ENCODE measurements at regions of chr12 and their contacts with region 1.

Region 1: GRCh38 chr12:110600254-110600653 is 13.7 kb upstream of the TCTN1 start:
- DNase-seq: no peak
- ATAC-seq: peak; percentile 74 to 77
- H3K4me3 ChIP-seq: no peak overlapping the region
- H3K27ac ChIP-seq: peak overlapping the region in 3 of 4 donors; percentile 25 to 32 (median 29)
- H3K4me1 ChIP-seq: peaks cover 4 to 9% of the 10 kb centered on the region in 2 donors
- H3K27me3 ChIP-seq: no peaks in the 10 kb centered on the region
- CTCF ChIP-seq: peak; percentile 25 to 59 (median 52)
- POLR2A ChIP-seq: no peak

Region 2: GRCh38 chr12:110449799-110450497 is 150.3 kb before region 1 on chr12 and contains the start of gene ARPC3:
- in situ Hi-C with region 1: loop called in 1 of 4 experiments (anchors 5 kb)
- intact Hi-C with region 1: loop called (anchors 1 kb)
- DNase-seq: peak; percentile 89 to 93
- ATAC-seq: peak; percentile 97 to 98
- H3K4me3 ChIP-seq: peak within 1 kb of the TSS; percentile 83 to 99 (median 92)
- H3K27ac ChIP-seq: peak within 1 kb of the TSS; percentile 86 to 97 (median 90)
- H3K4me1 ChIP-seq: peaks cover 7 to 8% of the 10 kb centered on the region in 2 donors
- H3K27me3 ChIP-seq: no peaks in the 10 kb centered on the region
- CTCF ChIP-seq: peak; percentile 81 to 95 (median 87)
- POLR2A ChIP-seq: peak; percentile 43 to 59
- total RNA-seq, gene ARPC3: 170 to 327 (median 213) TPM

Region 3: DNA sequence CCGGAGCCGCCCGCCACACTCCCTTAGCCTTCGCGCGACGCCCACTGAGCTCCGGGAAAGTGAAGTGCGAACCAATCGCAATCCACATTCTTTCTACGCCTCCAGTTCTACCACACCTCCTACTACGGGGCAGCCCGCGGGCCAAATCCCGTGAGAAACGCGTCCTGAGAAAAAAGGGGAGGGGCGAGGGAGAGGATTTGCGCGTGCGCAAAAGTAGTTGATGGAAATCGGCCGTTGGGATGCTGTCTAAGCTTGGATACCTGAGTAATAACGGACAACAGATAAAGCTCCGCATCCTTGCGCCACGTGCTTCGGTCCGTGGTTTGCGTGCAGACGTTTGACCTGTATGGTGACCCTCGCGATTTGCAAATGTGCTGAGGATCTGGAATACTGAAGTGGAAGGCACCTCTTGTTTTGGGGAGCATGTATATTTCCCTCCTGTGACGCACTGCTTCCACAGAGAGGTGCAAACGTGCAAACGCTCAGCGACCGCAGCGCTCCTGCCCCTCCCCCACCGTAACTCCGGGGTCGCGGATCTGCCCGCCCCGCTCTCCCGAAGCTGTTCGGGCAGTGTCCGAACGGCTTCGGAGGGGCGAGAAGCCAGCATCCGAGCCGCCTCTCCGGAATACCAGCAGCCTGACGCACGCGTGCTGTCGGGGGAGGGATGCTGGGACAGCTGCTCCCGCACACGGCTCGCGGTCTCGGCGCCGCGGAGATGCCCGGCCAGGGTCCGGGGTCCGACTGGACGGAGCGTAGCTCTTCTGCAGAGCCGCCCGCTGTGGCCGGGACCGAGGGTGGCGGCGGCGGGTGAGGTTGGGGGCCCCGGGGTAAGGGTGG is 131.8 kb before region 1 on chr12 and contains the starts of genes FAM216A and GPN3:
- in situ Hi-C with region 1: no loop called
- intact Hi-C with region 1: loop called (anchors 1 kb)
- DNase-seq: peak; percentile 94 to 97
- ATAC-seq: peak; percentile 94 to 95
- H3K4me3 ChIP-seq: peak within 1 kb of the TSS; percentile 63 to 89 (median 73)
- H3K27ac ChIP-seq: peak within 1 kb of the TSS; percentile 86 to 90 (median 88)
- H3K4me1 ChIP-seq: peaks cover 15 to 25% of the 10 kb centered on the region in 2 donors
- H3K27me3 ChIP-seq: no peaks in the 10 kb centered on the region
- CTCF ChIP-seq: no peak
- POLR2A ChIP-seq: peak; percentile 88 to 89
- total RNA-seq, gene FAM216A: 0.82 to 3.5 (median 2.2) TPM
- total RNA-seq, gene GPN3: 18.4 to 26.8 (median 24.6) TPM

Region 4: DNA sequence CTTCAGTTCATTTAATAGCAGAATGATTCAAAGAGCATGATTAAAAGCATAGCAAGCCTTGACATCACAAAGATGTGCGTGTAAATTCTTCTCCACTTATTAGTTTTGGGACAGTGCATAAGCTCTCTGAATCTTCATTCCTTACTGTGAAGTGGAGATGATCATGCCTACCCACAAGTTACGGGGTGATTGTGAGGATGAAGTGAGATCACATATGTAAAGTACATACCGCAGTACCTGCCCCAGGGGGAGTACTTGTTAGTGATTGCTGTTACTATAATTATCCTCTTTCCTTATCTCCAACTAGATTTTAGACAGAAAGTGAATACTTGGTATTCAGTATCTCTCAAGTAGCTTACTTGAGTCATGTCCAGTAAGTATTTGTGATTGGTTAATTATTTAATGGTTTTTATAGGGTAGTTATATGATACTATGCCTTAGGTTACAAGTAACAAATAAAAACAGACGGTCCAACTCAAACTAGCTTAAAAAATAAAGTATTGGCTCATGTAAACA is 92.1 kb before region 1 on chr12:
- in situ Hi-C with region 1: loop called (anchors 5 kb)
- intact Hi-C with region 1: loop called (anchors 1 kb)
- DNase-seq: no peak
- ATAC-seq: no peak
- H3K4me3 ChIP-seq: no peak overlapping the region
- H3K27ac ChIP-seq: no peak overlapping the region
- H3K4me1 ChIP-seq: no peaks in the 10 kb centered on the region
- H3K27me3 ChIP-seq: no peaks in the 10 kb centered on the region
- CTCF ChIP-seq: no peak
- POLR2A ChIP-seq: no peak

Region 5: GRCh38 chr12:110513842-110514241 is 86.4 kb before region 1 on chr12:
- in situ Hi-C with region 1: loop called (anchors 5 kb)
- intact Hi-C with region 1: loop called (anchors 1 kb)
- DNase-seq: no peak
- ATAC-seq: no peak
- H3K4me3 ChIP-seq: no peak overlapping the region
- H3K27ac ChIP-seq: no peak overlapping the region
- H3K4me1 ChIP-seq: no peaks in the 10 kb centered on the region
- H3K27me3 ChIP-seq: no peaks in the 10 kb centered on the region
- CTCF ChIP-seq: no peak
- POLR2A ChIP-seq: no peak

Region 6: DNA sequence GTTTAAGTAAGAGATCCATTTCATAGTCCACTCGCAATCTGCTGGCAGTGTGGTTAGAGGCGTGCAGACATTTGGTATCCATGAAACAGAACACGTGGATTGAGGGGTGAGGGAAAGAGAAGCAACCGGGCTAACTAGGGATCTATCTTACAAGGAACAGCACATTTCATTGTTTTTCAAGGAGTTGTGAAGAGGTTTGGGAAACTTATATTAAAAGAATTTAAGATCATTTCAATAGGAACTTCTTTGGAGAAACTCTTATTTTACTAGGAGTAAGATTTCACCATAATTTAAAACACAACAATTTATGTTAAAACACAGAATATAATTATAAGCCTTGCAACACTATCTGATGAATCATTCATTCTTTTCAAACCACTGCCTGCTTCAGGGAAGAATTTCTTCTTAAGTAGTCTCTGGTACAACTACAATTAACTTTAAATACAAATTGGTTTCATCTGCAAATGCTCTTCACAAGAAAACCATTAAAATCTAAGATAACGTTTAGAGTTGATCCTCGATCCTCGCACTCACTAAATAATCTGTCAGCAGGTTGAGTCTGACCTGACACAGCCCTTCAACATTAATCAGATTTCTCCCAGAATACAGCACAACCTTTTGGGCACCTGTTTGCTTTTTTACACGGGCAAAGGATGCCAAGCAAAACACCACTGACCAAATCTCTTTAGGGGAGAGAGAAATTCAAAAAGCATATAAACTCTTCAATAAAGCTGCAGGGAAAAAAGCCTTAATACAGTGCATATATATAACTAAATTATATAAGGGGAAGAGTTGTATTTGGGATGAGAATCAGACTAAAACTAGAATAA is 44.5 kb before region 1 on chr12:
- in situ Hi-C with region 1: no loop called
- intact Hi-C with region 1: loop called (anchors 1 kb)
- DNase-seq: no peak
- ATAC-seq: peak; percentile 66 to 81
- H3K4me3 ChIP-seq: peak overlapping the region in 1 of 4 donors; percentile 23
- H3K27ac ChIP-seq: peak overlapping the region; percentile 89 to 95 (median 94)
- H3K4me1 ChIP-seq: peaks cover 83 to 85% of the 10 kb centered on the region in 2 donors
- H3K27me3 ChIP-seq: no peaks in the 10 kb centered on the region
- CTCF ChIP-seq: no peak
- POLR2A ChIP-seq: no peak

Region 7: DNA sequence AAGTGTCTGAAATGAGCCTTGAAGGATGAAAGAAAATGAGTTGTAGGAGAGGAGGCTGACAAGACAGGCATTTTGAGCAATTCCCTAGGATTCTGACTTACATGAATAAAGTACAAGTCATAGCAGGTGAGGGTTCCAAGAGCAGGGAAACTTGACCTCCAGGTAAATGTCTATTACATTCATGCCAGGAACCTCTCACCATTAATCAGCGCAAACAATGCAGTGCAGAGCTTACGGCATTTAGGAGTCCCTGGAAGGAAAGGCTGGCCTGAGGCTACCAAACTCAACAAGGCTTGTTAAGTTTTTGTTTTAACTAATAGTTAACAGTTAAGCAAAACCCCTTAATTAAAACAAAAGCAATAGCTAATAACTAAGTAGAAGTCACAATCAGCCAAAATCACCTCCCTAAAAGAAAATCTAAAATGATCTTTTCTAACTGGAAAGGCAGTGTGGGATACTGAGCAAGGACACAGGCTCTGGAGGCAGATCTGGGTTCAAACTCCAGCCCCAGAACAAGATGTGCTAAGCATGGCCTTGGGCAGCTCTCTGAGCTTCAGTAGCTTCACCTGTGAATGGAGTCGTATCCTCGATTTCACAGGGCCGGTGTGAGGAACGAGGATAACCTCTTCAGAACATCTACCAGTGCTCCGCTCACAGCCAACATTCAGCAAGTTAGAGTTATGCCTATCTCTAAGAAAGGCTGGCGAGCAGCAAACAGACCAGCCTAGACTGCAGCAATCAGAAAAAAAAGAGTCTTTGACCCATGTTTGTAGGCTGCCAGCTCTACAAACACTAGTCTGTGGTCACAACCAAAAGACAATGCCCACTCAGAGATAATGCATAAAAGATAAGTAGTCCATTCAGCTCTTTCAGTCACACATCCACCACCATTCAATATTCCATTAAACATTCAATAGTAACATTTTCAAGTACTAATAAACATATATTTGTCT is 34.1 kb before region 1 on chr12:
- in situ Hi-C with region 1: no loop called
- intact Hi-C with region 1: no loop called
- DNase-seq: no peak
- ATAC-seq: peak in 1 of 2 donors; percentile 8
- H3K4me3 ChIP-seq: peak overlapping the region in 1 of 4 donors; percentile 22
- H3K27ac ChIP-seq: peak overlapping the region; percentile 72 to 95 (median 88)
- H3K4me1 ChIP-seq: peaks cover 67 to 76% of the 10 kb centered on the region in 2 donors
- H3K27me3 ChIP-seq: no peaks in the 10 kb centered on the region
- CTCF ChIP-seq: no peak
- POLR2A ChIP-seq: no peak

Region 8: GRCh38 chr12:110661337-110661972 is 61.2 kb after region 1 on chr12:
- in situ Hi-C with region 1: no loop called
- intact Hi-C with region 1: no loop called
- DNase-seq: peak in 1 of 2 donors; percentile 25
- ATAC-seq: no peak
- H3K4me3 ChIP-seq: no peak overlapping the region
- H3K27ac ChIP-seq: no peak overlapping the region
- H3K4me1 ChIP-seq: peaks cover 0 to 7% of the 10 kb centered on the region in 2 donors
- H3K27me3 ChIP-seq: no peaks in the 10 kb centered on the region
- CTCF ChIP-seq: no peak
- POLR2A ChIP-seq: no peak

Region 9: GRCh38 chr12:110698171-110698902 is 98.1 kb after region 1 on chr12:
- in situ Hi-C with region 1: no loop called
- intact Hi-C with region 1: loop called (anchors 1 kb)
- DNase-seq: peak; percentile 64 to 83
- ATAC-seq: peak; percentile 82 to 94
- H3K4me3 ChIP-seq: peak overlapping the region; percentile 16 to 57 (median 29)
- H3K27ac ChIP-seq: peak overlapping the region; percentile 3 to 64 (median 46)
- H3K4me1 ChIP-seq: peaks cover 0 to 15% of the 10 kb centered on the region in 2 donors
- H3K27me3 ChIP-seq: no peaks in the 10 kb centered on the region
- CTCF ChIP-seq: peak; percentile 60 to 78 (median 69)
- POLR2A ChIP-seq: no peak